GM23248 (cell line): ENCODE measurements at regions of chr17 and their contacts with region 1.

Region 1: DNA sequence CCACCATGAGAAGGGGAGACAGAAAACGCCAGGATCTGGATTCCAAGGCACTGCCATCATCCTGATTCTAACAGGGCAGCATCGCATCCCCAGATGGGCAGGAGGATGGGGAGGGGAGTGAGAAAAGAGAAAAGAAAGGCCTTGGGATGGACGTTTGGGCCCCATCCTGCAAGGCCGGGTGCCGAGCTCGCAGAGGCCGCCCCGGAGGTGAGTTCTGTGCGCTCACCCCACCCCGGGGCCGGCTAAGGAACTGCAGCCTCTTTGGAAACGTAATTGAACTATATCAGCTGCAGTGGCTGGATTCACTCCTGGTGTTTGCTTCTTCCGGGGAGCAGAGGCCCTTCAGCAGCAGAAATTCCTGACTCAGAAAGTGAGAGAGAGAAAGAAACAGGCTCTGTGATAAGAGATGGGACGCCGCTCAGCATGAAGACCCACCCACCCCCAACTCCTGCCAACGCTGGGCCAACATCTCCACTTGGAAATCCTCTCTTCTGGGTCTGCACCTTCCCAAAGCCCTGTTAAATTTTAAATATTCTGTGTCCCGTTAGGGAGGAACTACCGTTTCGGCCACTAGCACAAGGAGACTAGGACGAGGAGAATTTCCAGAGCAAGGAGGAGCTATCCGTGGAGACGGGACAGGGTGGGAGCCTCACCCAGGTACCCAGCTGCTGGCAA is 8.5 kb upstream of the SSTR2 start:
- DNase-seq: peak; percentile 85
- H3K4me3 ChIP-seq: no peak overlapping the region
- H3K27ac ChIP-seq: no peak overlapping the region
- H3K4me1 ChIP-seq: no peaks in the 10 kb centered on the region
- H3K27me3 ChIP-seq: peaks cover 5% of the 10 kb centered on the region

Region 2: GRCh38 chr17:72730077-72730476 is 426.2 kb before region 1 on chr17:
- in situ Hi-C with region 1: loop called (anchors 10 kb)
- DNase-seq: no peak
- H3K4me3 ChIP-seq: no peak overlapping the region
- H3K27ac ChIP-seq: no peak overlapping the region
- H3K4me1 ChIP-seq: no peaks in the 10 kb centered on the region
- H3K27me3 ChIP-seq: no peaks in the 10 kb centered on the region

Region 3: DNA sequence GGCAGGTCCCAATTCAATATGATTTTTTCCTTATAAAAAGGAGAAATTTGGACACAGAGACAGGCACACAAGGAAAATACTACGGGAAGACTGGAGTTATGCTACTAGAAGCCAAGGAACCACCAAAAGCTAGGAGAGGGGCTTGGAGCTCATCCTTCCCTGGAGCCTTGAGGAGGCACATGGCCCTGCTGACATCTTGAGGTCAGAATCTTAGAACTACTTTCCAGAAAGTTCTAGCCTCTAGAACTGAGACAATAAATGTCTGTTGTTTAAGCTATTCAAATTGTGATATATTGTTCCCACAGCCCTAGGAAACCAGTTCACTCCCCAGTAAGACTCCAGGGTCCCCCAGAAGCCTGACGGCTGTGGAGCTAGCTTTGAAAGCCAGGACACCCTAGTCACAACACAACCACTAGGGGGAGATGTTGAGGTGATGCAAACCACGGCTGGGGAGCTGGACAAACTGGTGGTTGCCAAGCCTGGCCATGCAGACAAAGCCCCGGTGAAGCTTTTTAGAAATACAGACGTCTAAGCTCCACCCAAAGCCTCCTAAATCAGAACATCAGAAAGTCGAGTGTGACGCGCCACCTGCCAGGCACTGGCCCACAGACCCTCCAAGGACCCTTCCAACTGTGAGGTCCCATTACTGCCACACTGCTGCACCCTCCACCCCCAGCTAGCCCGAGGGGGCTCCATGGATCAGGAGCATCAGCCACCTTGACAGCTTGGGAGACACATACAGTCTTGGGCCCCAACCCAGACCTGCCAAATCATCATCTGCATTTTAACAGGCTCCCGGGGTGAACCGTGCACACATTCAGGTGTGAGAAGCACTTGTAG is 170.2 kb before region 1 on chr17:
- in situ Hi-C with region 1: loop called (anchors 25 kb)
- DNase-seq: peak; percentile 85
- H3K4me3 ChIP-seq: no peak overlapping the region
- H3K27ac ChIP-seq: no peak overlapping the region
- H3K4me1 ChIP-seq: peaks cover 9% of the 10 kb centered on the region
- H3K27me3 ChIP-seq: no peaks in the 10 kb centered on the region